CD4-positive, alpha-beta memory T cell (primary cell): ENCODE measurements at regions of chr18 and their contacts with region 1.

Region 1: GRCh38 chr18:47912343-47912742 is 18.1 kb downstream of the SMAD2 start:
- DNase-seq: no peak
- H3K4me3 ChIP-seq: no peak overlapping the region
- H3K4me3 Mint-ChIP-seq: peak overlapping the region in 7 of 8 donors; percentile 18 to 80 (median 47)
- H3K27ac ChIP-seq: peak overlapping the region; percentile 24
- H3K27ac Mint-ChIP-seq: peak overlapping the region; percentile 25 to 87 (median 67)
- H3K4me1 ChIP-seq: peaks cover 78% of the 10 kb centered on the region
- H3K4me1 Mint-ChIP-seq: peaks cover 61 to 92% (median 76%) of the 10 kb centered on the region in 4 donors
- H3K27me3 ChIP-seq: no peaks in the 10 kb centered on the region
- H3K27me3 Mint-ChIP-seq: no peaks in the 10 kb centered on the region

Region 2: GRCh38 chr18:47772374-47773248 is 139.7 kb before region 1 on chr18:
- CTCF ChIA-PET with region 1: no interaction called
- POLR2A ChIA-PET with region 1: no interaction called
- intact Hi-C with region 1: no loop called
- DNase-seq: peak in 4 of 5 donors; percentile 37 to 48 (median 38)
- H3K4me3 ChIP-seq: no peak overlapping the region
- H3K4me3 Mint-ChIP-seq: no peak overlapping the region
- H3K27ac ChIP-seq: no peak overlapping the region
- H3K27ac Mint-ChIP-seq: no peak overlapping the region
- H3K4me1 ChIP-seq: peaks cover 6% of the 10 kb centered on the region
- H3K4me1 Mint-ChIP-seq: peaks cover 0 to 4% (median 0%) of the 10 kb centered on the region in 4 donors
- H3K27me3 ChIP-seq: no peaks in the 10 kb centered on the region
- H3K27me3 Mint-ChIP-seq: peaks cover 1 to 13% of the 10 kb centered on the region in 2 donors

Region 3: GRCh38 chr18:47870605-47871004 is 41.7 kb before region 1 on chr18:
- CTCF ChIA-PET with region 1: no interaction called
- POLR2A ChIA-PET with region 1: no interaction called
- intact Hi-C with region 1: loop called (anchors 5 kb)
- DNase-seq: no peak
- H3K4me3 ChIP-seq: no peak overlapping the region
- H3K4me3 Mint-ChIP-seq: no peak overlapping the region
- H3K27ac ChIP-seq: no peak overlapping the region
- H3K27ac Mint-ChIP-seq: peak overlapping the region in 1 of 7 donors; percentile 6
- H3K4me1 ChIP-seq: peaks cover 11% of the 10 kb centered on the region
- H3K4me1 Mint-ChIP-seq: peaks cover 18 to 49% (median 33%) of the 10 kb centered on the region in 4 donors
- H3K27me3 ChIP-seq: no peaks in the 10 kb centered on the region
- H3K27me3 Mint-ChIP-seq: no peaks in the 10 kb centered on the region

Region 4: DNA sequence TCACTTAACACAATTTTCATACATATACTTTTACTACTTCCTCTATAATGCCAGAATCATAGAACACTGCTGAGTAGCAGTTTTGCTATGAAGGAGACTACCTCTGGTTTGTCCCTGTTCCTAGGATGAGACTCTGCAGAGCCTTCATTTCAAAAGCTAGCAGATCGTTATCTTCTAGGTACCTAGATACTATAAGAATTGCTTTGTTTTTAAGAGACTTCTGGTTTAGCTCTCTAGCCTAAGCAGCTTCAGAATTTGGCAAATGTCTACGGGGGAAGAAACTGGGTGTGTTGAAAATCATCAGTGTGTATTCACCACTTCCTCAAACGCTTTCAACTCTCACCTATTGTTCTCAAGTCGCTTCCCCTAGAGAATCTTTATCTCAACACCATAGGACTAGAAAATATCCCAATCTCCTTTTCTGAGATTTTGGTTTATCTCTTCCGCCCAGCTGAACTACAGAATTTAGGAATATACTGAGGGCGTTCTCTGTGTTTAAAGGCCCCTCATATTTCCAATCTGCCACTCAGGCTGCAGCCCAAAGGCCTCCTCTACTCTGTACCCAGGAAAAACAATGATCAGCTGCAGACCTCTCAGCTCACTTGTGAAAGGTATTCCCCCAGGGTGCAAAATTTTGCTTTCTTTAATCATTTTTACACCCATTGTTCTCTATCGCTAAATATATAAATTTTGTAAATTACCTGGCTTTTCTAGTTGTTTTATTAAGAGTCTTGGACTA is 10.6 kb before region 1 on chr18:
- CTCF ChIA-PET with region 1: interaction called, 3 read pairs
- POLR2A ChIA-PET with region 1: interaction called, 5 read pairs
- intact Hi-C with region 1: loop called (anchors 1 kb)
- DNase-seq: peak in 4 of 5 donors; percentile 41 to 60 (median 48)
- H3K4me3 ChIP-seq: no peak overlapping the region
- H3K4me3 Mint-ChIP-seq: peak overlapping the region in 7 of 8 donors; percentile 39 to 81 (median 65)
- H3K27ac ChIP-seq: peak overlapping the region; percentile 30
- H3K27ac Mint-ChIP-seq: peak overlapping the region; percentile 78 to 94 (median 88)
- H3K4me1 ChIP-seq: peaks cover 53% of the 10 kb centered on the region
- H3K4me1 Mint-ChIP-seq: peaks cover 56 to 85% (median 62%) of the 10 kb centered on the region in 4 donors
- H3K27me3 ChIP-seq: no peaks in the 10 kb centered on the region
- H3K27me3 Mint-ChIP-seq: no peaks in the 10 kb centered on the region